Transverse colon (tissue), 4 donors: ENCODE measurements at regions of chr2 and their contacts with region 1.

Region 1: DNA sequence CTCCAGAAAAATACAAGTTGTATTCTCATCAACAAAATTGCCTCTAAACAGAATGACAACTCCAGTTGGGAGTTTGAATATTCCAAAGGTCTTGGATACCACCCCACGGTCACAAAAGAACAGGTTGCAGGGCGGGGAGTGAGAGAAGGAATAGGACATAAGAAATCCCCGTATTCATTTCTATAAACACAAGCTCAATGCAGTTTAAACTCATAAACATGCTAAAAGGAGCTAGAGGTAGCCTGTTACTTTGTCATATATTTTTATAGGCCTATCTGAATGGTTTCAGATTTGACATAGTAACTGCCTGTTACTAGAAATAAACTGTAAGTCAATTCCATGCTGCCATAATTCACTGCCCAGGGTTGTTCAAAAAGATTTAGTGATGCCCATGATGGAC is 567.5 kb downstream of the BCL11A start:
- DNase-seq: no peak
- H3K4me3 ChIP-seq: no peak overlapping the region
- H3K27ac ChIP-seq: no peak overlapping the region
- H3K4me1 ChIP-seq: peaks cover 0 to 11% (median 4%) of the 10 kb centered on the region in 4 donors
- H3K27me3 ChIP-seq: no peaks in the 10 kb centered on the region
- CTCF ChIP-seq: no peak
- EP300 ChIP-seq: no peak
- POLR2A ChIP-seq: no peak

Region 2: DNA sequence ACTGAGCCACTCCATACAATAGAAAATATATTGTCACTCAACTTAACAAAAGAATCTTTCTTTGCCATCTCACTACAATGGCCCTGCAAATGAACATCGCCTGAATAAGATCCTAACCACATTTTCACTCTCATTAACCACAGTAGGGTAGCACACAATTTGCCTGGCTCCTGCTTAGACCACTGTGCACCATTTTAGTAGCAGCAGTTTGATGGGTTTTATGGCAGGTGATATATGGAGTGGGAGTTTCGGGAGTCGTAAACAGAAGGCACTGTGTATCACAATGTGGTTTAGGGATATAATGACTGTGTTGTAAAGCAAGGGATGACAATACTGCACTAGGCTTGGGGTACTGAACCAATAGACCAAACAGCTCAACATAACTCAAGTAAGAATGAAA is 49.9 kb before region 1 on chr2:
- in situ Hi-C with region 1: no loop called
- intact Hi-C with region 1: no loop called
- DNase-seq: no peak
- H3K4me3 ChIP-seq: no peak overlapping the region
- H3K27ac ChIP-seq: no peak overlapping the region
- H3K4me1 ChIP-seq: no peaks in the 10 kb centered on the region
- H3K27me3 ChIP-seq: no peaks in the 10 kb centered on the region
- CTCF ChIP-seq: no peak
- EP300 ChIP-seq: no peak
- POLR2A ChIP-seq: no peak

Region 3: GRCh38 chr2:59974051-59974766 is 11.7 kb before region 1 on chr2:
- in situ Hi-C with region 1: no loop called
- intact Hi-C with region 1: loop called (anchors 1 kb)
- DNase-seq: no peak
- H3K4me3 ChIP-seq: no peak overlapping the region
- H3K27ac ChIP-seq: no peak overlapping the region
- H3K4me1 ChIP-seq: no peaks in the 10 kb centered on the region
- H3K27me3 ChIP-seq: no peaks in the 10 kb centered on the region
- CTCF ChIP-seq: no peak
- EP300 ChIP-seq: no peak
- POLR2A ChIP-seq: no peak